ENCODE measurements at regions of chr2 and their contacts with region 1.

Region 1: DNA sequence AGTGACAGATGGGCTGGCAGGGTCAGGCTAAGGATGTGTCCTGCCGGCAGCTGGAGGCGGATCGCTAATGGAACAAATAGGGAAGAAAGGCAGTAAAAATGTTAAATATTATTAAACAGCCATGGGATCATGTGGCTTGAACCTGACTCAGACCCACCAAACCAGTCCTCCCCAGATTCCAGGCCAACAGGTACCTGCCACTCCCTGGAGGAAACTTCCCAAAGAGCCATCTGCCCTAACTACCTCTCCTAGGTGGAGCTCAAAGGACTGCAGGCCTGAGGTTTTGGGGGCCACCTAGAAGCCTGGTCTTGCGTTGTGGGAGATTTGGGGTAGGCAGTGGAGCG is 34.3 kb downstream of the CIB4 start:
- DNase-seq: peak in 1 of 35 experiments; percentile 17
- ATAC-seq: no peak
- H3K4me3 ChIP-seq: no peak overlapping the region
- H3K4me3 Mint-ChIP-seq: no peak overlapping the region
- H3K27ac ChIP-seq: no peak overlapping the region
- H3K27ac Mint-ChIP-seq: no peak overlapping the region
- H3K4me1 ChIP-seq: peaks cover 18 to 24% of the 10 kb centered on the region in 2 experiments
- H3K4me1 Mint-ChIP-seq: peaks cover 23 to 29% (median 24%) of the 10 kb centered on the region in 3 donors
- H3K27me3 ChIP-seq: peaks cover 0 to 15% of the 10 kb centered on the region in 2 experiments
- H3K27me3 Mint-ChIP-seq: peaks cover 7 to 15% of the 10 kb centered on the region in 2 donors

Region 2: DNA sequence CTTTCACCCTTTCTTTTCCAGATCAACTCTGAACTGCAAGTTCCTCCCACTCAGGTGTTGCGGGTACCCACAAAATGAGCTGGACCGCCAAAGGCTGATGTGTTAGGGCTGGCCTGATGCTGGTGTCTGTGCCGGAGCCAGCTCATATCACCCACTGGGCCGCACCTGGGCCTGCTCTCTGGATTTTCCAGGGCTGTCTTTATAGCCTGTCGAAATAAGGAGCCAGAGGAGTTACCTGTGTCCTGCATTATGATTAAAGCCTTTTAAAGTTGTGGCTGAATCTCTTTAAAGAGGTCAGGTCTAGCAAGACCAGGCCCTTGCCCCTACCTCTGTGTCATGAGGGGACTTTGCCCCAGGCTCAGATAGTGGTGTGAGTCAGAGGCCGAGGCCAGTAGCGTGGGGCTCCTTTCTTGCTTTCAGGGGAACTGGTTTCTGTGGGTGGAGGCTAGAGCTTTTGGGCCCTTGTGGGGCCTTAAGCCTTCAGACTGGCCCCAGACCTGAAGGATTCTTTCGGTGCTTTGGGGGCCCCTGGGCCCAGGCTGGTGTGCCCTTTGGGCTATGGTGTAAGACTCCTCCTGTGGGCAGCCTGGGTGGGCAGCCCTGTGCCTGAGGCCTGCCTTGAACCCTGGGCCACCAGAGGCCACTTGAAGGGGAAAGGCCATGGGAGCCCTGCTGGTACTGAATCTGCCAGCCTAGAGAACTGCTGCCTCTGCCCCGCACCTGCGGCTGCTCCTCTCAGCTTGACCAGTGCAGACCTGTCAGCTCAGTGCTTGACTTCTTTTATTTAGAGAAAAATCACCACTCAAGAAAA is 150.2 kb before region 1 on chr2:
- CTCF ChIA-PET with region 1: no interaction called
- POLR2A ChIA-PET with region 1: no interaction called
- DNase-seq: peak in 1 of 35 experiments; percentile 6
- ATAC-seq: no peak
- H3K4me3 ChIP-seq: no peak overlapping the region
- H3K4me3 Mint-ChIP-seq: no peak overlapping the region
- H3K27ac ChIP-seq: no peak overlapping the region
- H3K27ac Mint-ChIP-seq: no peak overlapping the region
- H3K4me1 ChIP-seq: no peaks in the 10 kb centered on the region
- H3K4me1 Mint-ChIP-seq: no peaks in the 10 kb centered on the region
- H3K27me3 ChIP-seq: peaks cover 0 to 13% of the 10 kb centered on the region in 2 experiments
- H3K27me3 Mint-ChIP-seq: peaks cover 0 to 6% of the 10 kb centered on the region in 2 donors

Region 3: GRCh38 chr2:26745609-26746327 is 138.9 kb after region 1 on chr2:
- CTCF ChIA-PET with region 1: interaction called, 6 to 10 read pairs
- POLR2A ChIA-PET with region 1: interaction called in 1 of 2 experiments, 8 read pairs
- DNase-seq: peak; percentile 17 to 87 (median 67)
- ATAC-seq: peak; percentile 74 to 78 (median 77)
- H3K4me3 ChIP-seq: no peak overlapping the region
- H3K4me3 Mint-ChIP-seq: no peak overlapping the region
- H3K27ac ChIP-seq: no peak overlapping the region
- H3K27ac Mint-ChIP-seq: no peak overlapping the region
- H3K4me1 ChIP-seq: peaks cover 0 to 8% of the 10 kb centered on the region in 2 experiments
- H3K4me1 Mint-ChIP-seq: peaks cover 0 to 5% (median 4%) of the 10 kb centered on the region in 3 donors
- H3K27me3 ChIP-seq: peaks cover 0 to 4% of the 10 kb centered on the region in 2 experiments
- H3K27me3 Mint-ChIP-seq: no peaks in the 10 kb centered on the region